Breast epithelium (tissue), 4 donors: ENCODE measurements at regions of chr14 and their contacts with region 1.

Region 1: DNA sequence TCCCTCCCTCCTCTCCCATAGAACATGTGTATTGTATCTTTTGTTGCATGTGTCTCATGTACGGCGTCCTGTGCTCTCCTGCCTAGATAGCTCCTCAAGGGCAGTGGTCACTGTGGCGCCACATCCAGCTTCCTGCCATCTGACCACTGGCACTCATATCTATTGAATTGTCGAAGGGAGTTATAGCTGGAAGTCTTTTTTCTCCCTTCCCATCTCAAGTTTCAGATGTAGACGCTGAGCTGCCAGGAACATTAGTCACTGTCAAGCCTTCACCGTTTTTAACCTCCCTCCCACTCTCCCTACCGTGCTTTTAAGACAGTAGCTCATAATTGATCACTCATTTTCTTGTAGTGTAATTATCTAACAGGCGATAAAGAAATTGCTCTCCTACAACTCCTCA is 33.0 kb downstream of the MTHFD1 start:
- DNase-seq: no peak
- H3K4me3 ChIP-seq: no peak overlapping the region
- H3K27ac ChIP-seq: no peak overlapping the region
- H3K4me1 ChIP-seq: no peaks in the 10 kb centered on the region
- H3K27me3 ChIP-seq: no peaks in the 10 kb centered on the region
- CTCF ChIP-seq: no peak
- POLR2A ChIP-seq: no peak

Region 2: GRCh38 chr14:63614679-63615363 is 806.3 kb before region 1 on chr14:
- intact Hi-C with region 1: no loop called
- DNase-seq: no peak
- H3K4me3 ChIP-seq: no peak overlapping the region
- H3K27ac ChIP-seq: no peak overlapping the region
- H3K4me1 ChIP-seq: no peaks in the 10 kb centered on the region
- H3K27me3 ChIP-seq: no peaks in the 10 kb centered on the region
- CTCF ChIP-seq: no peak
- POLR2A ChIP-seq: no peak

Region 3: DNA sequence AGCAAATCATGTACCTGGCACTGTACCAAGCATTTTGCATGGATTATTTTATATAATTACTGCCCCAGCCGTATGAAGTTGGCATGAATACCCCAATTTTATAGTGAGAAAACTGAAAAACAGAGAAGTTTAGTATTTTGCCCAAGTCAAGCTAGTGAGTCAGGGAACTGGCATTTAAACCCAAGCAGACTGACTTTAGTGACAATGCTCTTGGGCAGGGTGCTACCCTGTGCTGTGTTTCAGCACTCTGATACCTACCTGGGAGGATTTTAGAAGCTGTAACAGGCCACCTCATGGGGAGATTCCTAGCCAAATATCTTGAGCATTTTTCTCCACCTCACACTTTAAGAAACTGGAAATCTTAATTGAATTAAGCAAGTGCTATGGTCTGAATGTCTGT is 779.3 kb after region 1 on chr14:
- intact Hi-C with region 1: loop called (anchors 5 kb)
- DNase-seq: no peak
- H3K4me3 ChIP-seq: no peak overlapping the region
- H3K27ac ChIP-seq: no peak overlapping the region
- H3K4me1 ChIP-seq: no peaks in the 10 kb centered on the region
- H3K27me3 ChIP-seq: no peaks in the 10 kb centered on the region
- CTCF ChIP-seq: no peak
- POLR2A ChIP-seq: no peak